ENCODE measurements at regions of chr1 and their contacts with region 1.

Region 1: DNA sequence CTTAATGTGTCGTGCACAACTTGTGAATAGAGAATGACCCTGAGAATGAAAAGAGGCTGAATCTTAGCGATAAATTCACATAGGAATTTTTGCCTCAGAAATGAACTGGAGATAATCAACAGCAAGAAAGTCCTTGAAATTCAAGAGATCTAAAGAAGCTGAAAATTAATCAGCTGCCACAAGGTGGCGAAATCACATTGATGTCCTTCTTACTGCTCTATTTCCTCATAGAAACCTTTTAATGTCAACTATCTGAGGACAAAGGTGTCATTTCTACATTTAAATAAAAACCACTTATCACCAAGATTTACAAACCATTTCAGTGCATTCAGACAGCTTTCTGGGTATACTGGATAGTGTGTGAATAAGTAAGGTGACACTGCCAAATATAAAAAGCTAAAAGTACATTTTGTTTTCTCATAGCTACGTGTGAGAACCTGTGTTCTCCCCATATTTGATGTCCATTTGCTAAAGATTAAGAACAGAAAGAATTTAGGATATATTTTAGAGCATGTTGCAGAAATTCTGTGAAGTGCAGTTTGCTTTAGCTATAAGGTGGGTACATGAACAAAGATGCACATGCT is 485.3 kb upstream of the PTBP2 start:
- DNase-seq: peak in 1 of 9 experiments; percentile 10
- ATAC-seq: no peak
- H3K4me3 ChIP-seq: no peak overlapping the region
- H3K4me3 Mint-ChIP-seq: no peak overlapping the region
- H3K27ac ChIP-seq: no peak overlapping the region
- H3K27ac Mint-ChIP-seq: no peak overlapping the region
- H3K4me1 ChIP-seq: no peaks in the 10 kb centered on the region
- H3K4me1 Mint-ChIP-seq: no peaks in the 10 kb centered on the region
- H3K27me3 ChIP-seq: no peaks in the 10 kb centered on the region
- H3K27me3 Mint-ChIP-seq: no peaks in the 10 kb centered on the region
- CTCF ChIP-seq: no peak

Region 2: DNA sequence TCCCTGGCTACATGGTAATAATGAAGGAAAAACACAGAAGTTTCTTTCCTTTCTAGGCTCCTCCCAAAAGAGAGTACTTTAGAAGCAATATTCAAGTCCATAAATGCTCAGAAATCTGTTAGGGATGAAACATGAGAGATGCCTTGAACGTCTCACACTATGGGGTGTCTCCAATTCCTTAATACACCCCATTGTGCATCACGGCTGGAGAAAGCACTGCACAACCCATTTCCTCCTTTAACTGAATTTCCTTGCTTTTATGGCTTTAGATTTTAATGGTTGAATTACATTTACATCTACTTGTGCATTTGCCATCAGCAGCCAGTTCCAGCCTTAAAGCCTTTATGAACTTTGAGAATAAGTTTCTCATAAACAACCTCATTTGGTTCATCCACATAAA is 13.5 kb before region 1 on chr1:
- CTCF ChIA-PET with region 1: no interaction called
- POLR2A ChIA-PET with region 1: no interaction called
- intact Hi-C with region 1: no loop called
- DNase-seq: no peak
- ATAC-seq: no peak
- H3K4me3 ChIP-seq: no peak overlapping the region
- H3K4me3 Mint-ChIP-seq: no peak overlapping the region
- H3K27ac ChIP-seq: no peak overlapping the region
- H3K27ac Mint-ChIP-seq: no peak overlapping the region
- H3K4me1 ChIP-seq: no peaks in the 10 kb centered on the region
- H3K4me1 Mint-ChIP-seq: no peaks in the 10 kb centered on the region
- H3K27me3 ChIP-seq: no peaks in the 10 kb centered on the region
- H3K27me3 Mint-ChIP-seq: no peaks in the 10 kb centered on the region
- CTCF ChIP-seq: no peak

Region 3: DNA sequence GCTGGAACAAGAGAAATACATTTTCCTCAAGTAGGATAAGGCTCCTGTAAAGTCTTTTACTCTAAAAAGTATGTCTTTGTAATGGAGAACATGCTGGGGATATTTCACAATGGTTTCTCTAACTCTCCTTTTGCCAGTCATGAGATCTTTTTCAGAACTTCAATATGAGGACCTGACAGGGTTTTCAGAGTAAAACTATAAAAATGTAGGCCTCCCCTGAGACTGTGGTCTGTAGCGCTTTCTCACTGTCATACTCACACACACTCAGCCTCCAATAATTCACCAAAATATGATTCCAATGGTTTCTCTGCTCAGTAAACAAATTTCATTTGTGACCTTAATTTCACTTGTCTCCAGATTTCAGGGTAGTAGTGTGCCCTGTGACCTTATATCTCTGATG is 45.2 kb after region 1 on chr1:
- CTCF ChIA-PET with region 1: no interaction called
- POLR2A ChIA-PET with region 1: no interaction called
- intact Hi-C with region 1: no loop called
- DNase-seq: no peak
- ATAC-seq: no peak
- H3K4me3 ChIP-seq: no peak overlapping the region
- H3K4me3 Mint-ChIP-seq: no peak overlapping the region
- H3K27ac ChIP-seq: no peak overlapping the region
- H3K27ac Mint-ChIP-seq: no peak overlapping the region
- H3K4me1 ChIP-seq: no peaks in the 10 kb centered on the region
- H3K4me1 Mint-ChIP-seq: no peaks in the 10 kb centered on the region
- H3K27me3 ChIP-seq: no peaks in the 10 kb centered on the region
- H3K27me3 Mint-ChIP-seq: no peaks in the 10 kb centered on the region
- CTCF ChIP-seq: no peak

Region 4: DNA sequence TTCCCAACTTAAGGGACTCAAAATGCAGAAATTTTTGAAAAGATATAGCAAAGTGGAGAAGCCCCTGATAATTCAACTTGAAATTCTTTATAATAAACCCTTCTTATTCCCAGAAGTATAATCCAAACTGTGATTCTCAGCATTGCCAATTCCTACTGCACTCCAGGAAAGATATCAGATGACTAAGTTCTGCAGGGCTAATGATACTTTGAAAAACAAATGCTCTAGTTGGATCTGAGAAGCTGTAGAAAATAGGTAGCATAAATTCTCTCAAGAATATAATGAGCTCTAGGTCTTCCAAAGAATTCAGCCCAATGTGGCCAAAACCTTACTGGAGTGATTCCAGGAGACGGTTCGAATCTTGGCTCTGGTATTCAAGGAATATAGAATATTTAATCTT is 191.4 kb after region 1 on chr1:
- CTCF ChIA-PET with region 1: no interaction called
- POLR2A ChIA-PET with region 1: no interaction called
- intact Hi-C with region 1: no loop called
- DNase-seq: no peak
- ATAC-seq: no peak
- H3K4me3 ChIP-seq: no peak overlapping the region
- H3K4me3 Mint-ChIP-seq: no peak overlapping the region
- H3K27ac ChIP-seq: no peak overlapping the region
- H3K27ac Mint-ChIP-seq: no peak overlapping the region
- H3K4me1 ChIP-seq: no peaks in the 10 kb centered on the region
- H3K4me1 Mint-ChIP-seq: no peaks in the 10 kb centered on the region
- H3K27me3 ChIP-seq: no peaks in the 10 kb centered on the region
- H3K27me3 Mint-ChIP-seq: no peaks in the 10 kb centered on the region
- CTCF ChIP-seq: no peak

Region 5: DNA sequence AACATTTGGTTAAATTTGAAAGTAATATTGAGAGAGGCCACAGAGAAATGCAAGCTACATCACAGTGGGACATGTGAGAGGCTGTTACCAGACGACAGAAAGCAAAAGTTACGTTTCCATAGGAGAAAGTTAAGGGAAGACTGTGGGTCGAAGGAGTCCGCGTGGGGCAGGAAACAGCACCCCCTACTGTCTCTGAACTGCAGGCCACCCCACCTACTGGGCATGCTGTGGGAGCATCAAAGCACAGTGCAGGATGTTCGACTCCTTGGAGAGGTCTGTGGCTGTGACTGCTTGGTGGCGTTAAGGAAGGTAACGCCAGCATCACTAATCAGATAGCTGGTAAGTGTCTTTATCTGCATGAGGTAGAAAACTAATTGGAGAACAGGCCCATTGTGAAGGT is 609.2 kb after region 1 on chr1:
- CTCF ChIA-PET with region 1: no interaction called
- POLR2A ChIA-PET with region 1: no interaction called
- intact Hi-C with region 1: loop called in 1 of 2 experiments (anchors 10 kb)
- DNase-seq: peak in 4 of 9 experiments; percentile 11 to 26 (median 17)
- ATAC-seq: no peak
- H3K4me3 ChIP-seq: no peak overlapping the region
- H3K4me3 Mint-ChIP-seq: no peak overlapping the region
- H3K27ac ChIP-seq: no peak overlapping the region
- H3K27ac Mint-ChIP-seq: no peak overlapping the region
- H3K4me1 ChIP-seq: no peaks in the 10 kb centered on the region
- H3K4me1 Mint-ChIP-seq: no peaks in the 10 kb centered on the region
- H3K27me3 ChIP-seq: no peaks in the 10 kb centered on the region
- H3K27me3 Mint-ChIP-seq: peaks cover 3% of the 10 kb centered on the region
- CTCF ChIP-seq: no peak